ENCODE measurements at regions of chr2 and their contacts with region 1.

Region 1: GRCh38 chr2:211157856-211158463 is 601.6 kb downstream of the CPS1 start:
- DNase-seq: peak; percentile 67
- ATAC-seq: peak; percentile 99
- H3K4me3 ChIP-seq: no peak overlapping the region
- H3K27ac ChIP-seq: no peak overlapping the region
- H3K4me1 ChIP-seq: no peaks in the 10 kb centered on the region
- H3K27me3 ChIP-seq: no peaks in the 10 kb centered on the region
- CTCF ChIP-seq: peak; percentile 83
- EP300 ChIP-seq: no peak
- POLR2A ChIP-seq: no peak
- RAD21 ChIP-seq: 0 out of 2 replicates have a peak, but pooled peaks have one; percentile 44

Region 2: GRCh38 chr2:210445116-210445707 is 712.7 kb before region 1 on chr2:
- CTCF ChIA-PET with region 1: no interaction called
- POLR2A ChIA-PET with region 1: no interaction called
- in situ Hi-C with region 1: no loop called
- intact Hi-C with region 1: loop called (anchors 5 kb)
- DNase-seq: peak; percentile 18
- ATAC-seq: no peak
- H3K4me3 ChIP-seq: no peak overlapping the region
- H3K27ac ChIP-seq: no peak overlapping the region
- H3K4me1 ChIP-seq: 0 out of 2 replicates have a peak, but pooled peaks cover 5% of the 10 kb centered on the region
- H3K27me3 ChIP-seq: no peaks in the 10 kb centered on the region
- CTCF ChIP-seq: peak; percentile 65
- EP300 ChIP-seq: no peak
- POLR2A ChIP-seq: no peak
- RAD21 ChIP-seq: 0 out of 2 replicates have a peak, but pooled peaks have one; percentile 38

Region 3: GRCh38 chr2:210577263-210578071 is 580.5 kb before region 1 on chr2:
- CTCF ChIA-PET with region 1: no interaction called
- POLR2A ChIA-PET with region 1: no interaction called
- in situ Hi-C with region 1: no loop called
- intact Hi-C with region 1: loop called (anchors 1 kb)
- DNase-seq: peak; percentile 56
- ATAC-seq: peak; percentile 90
- H3K4me3 ChIP-seq: no peak overlapping the region
- H3K27ac ChIP-seq: no peak overlapping the region
- H3K4me1 ChIP-seq: no peaks in the 10 kb centered on the region
- H3K27me3 ChIP-seq: no peaks in the 10 kb centered on the region
- CTCF ChIP-seq: peak; percentile 83
- EP300 ChIP-seq: no peak
- POLR2A ChIP-seq: no peak
- RAD21 ChIP-seq: no peak

Region 4: DNA sequence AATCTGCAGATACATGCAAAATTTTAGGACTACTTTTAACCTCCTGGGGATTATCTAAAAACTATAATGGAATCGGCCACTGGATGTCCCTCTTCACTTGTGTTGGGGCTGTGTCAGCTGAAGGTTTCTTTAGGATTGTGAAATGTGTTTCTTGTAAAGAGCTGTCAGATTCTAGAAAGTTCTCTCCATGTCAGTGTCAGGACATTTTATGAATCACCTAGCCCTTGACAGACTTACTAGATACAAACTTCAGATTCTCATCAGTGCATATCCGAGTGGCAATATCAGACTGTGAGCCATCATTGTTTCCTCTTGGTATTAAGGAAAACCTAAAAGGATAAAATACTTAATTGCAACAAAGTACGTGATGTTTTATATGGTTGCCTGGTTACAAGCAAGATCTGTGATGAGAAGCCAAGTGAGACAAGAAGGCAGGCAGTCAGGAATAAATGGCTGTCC is 494.3 kb before region 1 on chr2:
- CTCF ChIA-PET with region 1: no interaction called
- POLR2A ChIA-PET with region 1: no interaction called
- in situ Hi-C with region 1: no loop called
- intact Hi-C with region 1: loop called (anchors 1 kb)
- DNase-seq: peak; percentile 18
- ATAC-seq: peak; percentile 59; the same call in 2 of the 3 replicates
- H3K4me3 ChIP-seq: no peak overlapping the region
- H3K27ac ChIP-seq: no peak overlapping the region
- H3K4me1 ChIP-seq: peaks cover 11% of the 10 kb centered on the region
- H3K27me3 ChIP-seq: no peaks in the 10 kb centered on the region
- CTCF ChIP-seq: peak; percentile 49
- EP300 ChIP-seq: no peak
- POLR2A ChIP-seq: no peak
- RAD21 ChIP-seq: no peak

Region 5: DNA sequence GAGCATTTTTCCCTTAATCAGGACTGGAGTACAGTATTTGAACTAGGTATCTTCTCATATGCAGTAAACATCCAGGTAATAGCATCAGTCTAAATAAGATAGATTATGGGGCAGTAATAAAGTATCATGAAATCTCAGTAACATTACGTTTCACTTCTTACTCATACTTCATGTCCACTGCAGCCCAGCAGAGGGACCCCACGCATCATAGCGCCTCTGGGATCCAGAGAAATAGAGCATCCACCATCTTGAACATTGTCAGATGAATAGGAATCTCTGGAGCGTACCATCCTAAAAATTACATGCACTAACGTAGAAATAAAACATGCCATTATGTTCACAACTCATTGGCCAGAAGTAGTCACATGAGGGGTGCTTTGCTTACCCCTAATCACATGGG is 102.5 kb before region 1 on chr2:
- CTCF ChIA-PET with region 1: interaction called, 7 read pairs
- POLR2A ChIA-PET with region 1: no interaction called
- in situ Hi-C with region 1: no loop called
- intact Hi-C with region 1: loop called (anchors 1 kb)
- DNase-seq: peak; percentile 21
- ATAC-seq: peak; percentile 89
- H3K4me3 ChIP-seq: no peak overlapping the region
- H3K27ac ChIP-seq: no peak overlapping the region
- H3K4me1 ChIP-seq: no peaks in the 10 kb centered on the region
- H3K27me3 ChIP-seq: no peaks in the 10 kb centered on the region
- CTCF ChIP-seq: peak; percentile 66
- EP300 ChIP-seq: no peak
- POLR2A ChIP-seq: no peak
- RAD21 ChIP-seq: peak; percentile 37; the same call in 1 of the 2 replicates

Region 6: DNA sequence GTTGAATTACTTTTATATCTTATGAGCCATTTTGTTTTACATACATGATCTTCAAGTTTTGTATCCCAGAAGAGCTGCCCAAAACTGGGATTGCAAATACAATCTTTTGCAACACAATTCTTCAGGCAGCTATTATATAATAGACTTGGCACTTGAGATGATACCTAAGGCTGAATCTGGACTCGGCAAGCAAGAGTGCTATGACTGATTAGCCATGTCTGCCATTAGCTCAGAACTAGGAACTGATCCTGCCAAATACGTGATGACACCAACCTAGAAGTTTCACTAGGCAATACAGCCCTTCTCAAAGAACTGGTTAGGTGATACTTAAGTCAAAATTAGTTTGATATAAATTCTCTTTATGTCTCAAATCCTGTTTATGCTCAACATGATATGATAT is 18.0 kb after region 1 on chr2:
- CTCF ChIA-PET with region 1: no interaction called
- POLR2A ChIA-PET with region 1: no interaction called
- in situ Hi-C with region 1: no loop called
- intact Hi-C with region 1: no loop called
- DNase-seq: no peak
- ATAC-seq: no peak
- H3K4me3 ChIP-seq: no peak overlapping the region
- H3K27ac ChIP-seq: no peak overlapping the region
- H3K4me1 ChIP-seq: no peaks in the 10 kb centered on the region
- H3K27me3 ChIP-seq: no peaks in the 10 kb centered on the region
- CTCF ChIP-seq: no peak
- EP300 ChIP-seq: no peak
- POLR2A ChIP-seq: no peak
- RAD21 ChIP-seq: no peak